Sigmoid colon (tissue), 7 donors: ENCODE measurements at regions of chr3 and their contacts with region 1.

Region 1: GRCh38 chr3:23611737-23612295 is 193.9 kb upstream of the UBE2E1 start:
- DNase-seq: peak; percentile 90
- H3K4me3 ChIP-seq: peak overlapping the region in 2 of 4 donors; percentile 3 to 22
- H3K27ac ChIP-seq: peak overlapping the region in 3 of 4 donors; percentile 45 to 68 (median 61)
- H3K4me1 ChIP-seq: peaks cover 0 to 31% (median 26%) of the 10 kb centered on the region in 4 donors
- H3K27me3 ChIP-seq: no peaks in the 10 kb centered on the region
- CTCF ChIP-seq: no peak
- EP300 ChIP-seq: peak in 1 of 4 donors; percentile 7
- POLR2A ChIP-seq: no peak

Region 2: GRCh38 chr3:23490459-23490858 is 121.4 kb before region 1 on chr3:
- intact Hi-C with region 1: no loop called
- DNase-seq: no peak
- H3K4me3 ChIP-seq: no peak overlapping the region
- H3K27ac ChIP-seq: no peak overlapping the region
- H3K4me1 ChIP-seq: peaks cover 0 to 20% (median 13%) of the 10 kb centered on the region in 4 donors
- H3K27me3 ChIP-seq: no peaks in the 10 kb centered on the region
- CTCF ChIP-seq: no peak
- EP300 ChIP-seq: no peak
- POLR2A ChIP-seq: no peak

Region 3: DNA sequence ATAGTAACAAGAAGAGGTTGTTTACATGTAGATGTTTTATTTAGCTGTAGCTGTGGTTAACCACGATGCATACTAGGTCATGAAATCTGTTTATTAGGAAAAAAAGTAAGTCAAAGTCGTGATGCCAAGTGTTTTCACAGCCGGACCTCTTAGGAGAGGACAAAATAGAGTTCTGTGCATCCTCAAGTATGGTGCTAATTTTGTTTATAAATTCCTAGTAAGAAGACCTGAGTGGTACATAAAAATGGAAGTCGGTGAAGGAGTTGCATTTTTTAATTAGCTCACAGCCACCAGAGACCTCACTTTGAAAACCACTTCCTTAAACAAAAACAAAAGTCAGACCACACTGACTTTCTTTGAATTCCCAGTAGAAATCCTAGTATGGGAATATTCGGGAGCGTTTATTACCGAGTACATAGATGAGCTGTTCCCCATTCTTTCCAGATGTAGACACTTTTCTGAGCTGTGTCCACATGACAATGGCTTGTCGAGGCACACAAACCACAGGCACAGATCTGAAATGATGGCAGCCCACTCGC is 50.3 kb after region 1 on chr3:
- intact Hi-C with region 1: loop called (anchors 5 kb)
- DNase-seq: no peak
- H3K4me3 ChIP-seq: no peak overlapping the region
- H3K27ac ChIP-seq: no peak overlapping the region
- H3K4me1 ChIP-seq: peaks cover 0 to 18% (median 15%) of the 10 kb centered on the region in 4 donors
- H3K27me3 ChIP-seq: no peaks in the 10 kb centered on the region
- CTCF ChIP-seq: no peak
- EP300 ChIP-seq: no peak
- POLR2A ChIP-seq: no peak